GM12878 (cell line): ENCODE measurements at regions of chr11 and their contacts with region 1.

Region 1: DNA sequence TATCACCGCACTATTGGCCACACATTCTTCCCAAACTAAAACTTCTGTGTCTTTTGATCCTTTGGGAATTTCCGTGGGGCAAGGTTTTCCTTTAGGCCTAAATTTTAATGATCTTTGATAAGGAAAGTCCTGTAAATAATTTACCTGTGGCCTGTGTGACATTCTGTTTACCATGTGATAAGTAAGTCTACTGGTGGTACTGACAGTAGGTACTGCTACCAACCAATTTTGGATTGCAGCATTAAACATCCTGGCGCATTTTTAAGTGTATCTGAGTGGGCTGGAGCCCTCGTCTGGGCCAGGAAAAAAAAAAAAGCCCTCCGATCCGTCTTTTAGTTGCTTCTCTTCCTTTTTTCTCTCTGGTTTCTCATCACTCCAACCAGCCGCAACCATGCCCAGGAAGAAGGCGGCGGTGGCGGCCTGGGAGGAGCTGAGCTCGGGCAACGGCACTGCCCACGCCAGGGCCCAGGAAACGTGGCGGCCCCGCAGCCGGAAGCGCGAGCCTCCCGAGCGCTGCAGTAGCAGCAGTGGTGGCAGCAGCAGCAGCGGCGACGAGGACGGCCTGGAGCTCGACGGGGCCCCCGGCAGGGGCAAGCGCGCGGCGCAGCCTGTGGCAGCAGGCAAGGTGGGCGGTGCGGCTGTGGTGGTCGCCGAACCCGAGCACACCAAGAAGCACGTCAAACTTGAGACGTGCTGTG is 33.6 kb downstream of the ASRGL1 start:
- DNase-seq: no peak
- ATAC-seq: peak; percentile 82
- H3K4me3 ChIP-seq: no peak overlapping the region
- H3K27ac ChIP-seq: no peak overlapping the region
- H3K4me1 ChIP-seq: no peaks in the 10 kb centered on the region; the same call in 1 of the 2 replicates
- H3K27me3 ChIP-seq: no peaks in the 10 kb centered on the region
- CTCF ChIP-seq: no peak
- EP300 ChIP-seq: no peak
- POLR2A ChIP-seq: no peak
- RAD21 ChIP-seq: no peak

Region 2: GRCh38 chr11:62169091-62169847 is 201.6 kb before region 1 on chr11:
- CTCF ChIA-PET with region 1: no interaction called
- POLR2A ChIA-PET with region 1: no interaction called
- RAD21 ChIA-PET with region 1: no interaction called
- SMC1A ChIA-PET with region 1: no interaction called
- in situ Hi-C with region 1: no loop called
- intact Hi-C with region 1: loop called (anchors 5 kb)
- DNase-seq: no peak
- ATAC-seq: no peak
- H3K4me3 ChIP-seq: no peak overlapping the region
- H3K27ac ChIP-seq: no peak overlapping the region
- H3K4me1 ChIP-seq: no peaks in the 10 kb centered on the region
- H3K27me3 ChIP-seq: peaks cover 0 to 2% of the 10 kb centered on the region in 2 experiments; a peak in 1 of 4 replicates
- CTCF ChIP-seq: no peak
- EP300 ChIP-seq: no peak
- POLR2A ChIP-seq: no peak
- RAD21 ChIP-seq: no peak